ENCODE measurements at regions of chr22 and their contacts with region 1.

Region 1: DNA sequence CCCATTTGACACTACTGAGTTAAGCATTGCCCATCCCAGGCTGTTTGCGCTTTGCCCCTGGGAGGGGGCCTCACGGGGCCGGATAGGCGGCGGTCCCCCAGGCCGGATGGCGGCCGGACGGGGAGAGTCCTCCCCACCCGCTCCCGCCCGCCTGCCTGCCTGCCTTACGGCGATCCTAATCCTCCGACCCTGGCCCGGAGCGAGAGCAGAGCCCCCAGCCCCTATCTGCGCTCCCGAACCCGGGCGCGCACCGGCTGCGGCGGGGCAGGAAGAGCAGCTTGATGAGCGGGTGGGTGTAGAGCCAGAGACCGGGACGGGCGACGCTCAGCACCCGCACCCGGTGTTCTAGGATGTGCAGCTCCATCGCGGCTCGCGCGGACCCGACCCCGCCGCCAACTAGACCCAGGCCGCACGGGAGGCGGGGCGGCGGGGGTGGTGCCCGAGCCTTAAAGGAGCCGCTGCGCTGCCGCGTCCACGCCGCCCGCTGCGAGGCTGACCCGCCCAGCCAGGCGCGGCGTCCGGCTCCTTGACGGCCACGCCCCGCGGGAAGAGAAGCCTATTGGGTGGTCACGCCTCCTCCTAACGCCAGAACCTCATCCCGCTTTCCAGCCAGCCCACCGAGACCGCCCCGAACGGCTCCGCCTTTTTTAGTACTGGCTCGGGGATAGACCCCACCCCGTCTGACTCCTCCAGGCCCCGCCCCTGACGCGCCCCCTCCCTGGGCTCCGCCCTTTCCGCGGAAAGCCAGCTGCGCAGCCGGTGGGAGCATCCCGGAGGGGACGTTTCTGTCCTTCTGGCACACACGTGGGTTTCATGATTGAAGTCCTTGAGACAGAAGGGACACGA is at the start of gene CASTOR1:
- DNase-seq: peak; percentile 90
- ATAC-seq: peak; percentile 85
- H3K4me3 Mint-ChIP-seq: peak within 1 kb of the TSS; percentile 88
- H3K27ac Mint-ChIP-seq: peak within 1 kb of the TSS; percentile 82
- H3K4me1 Mint-ChIP-seq: peaks cover 38% of the 10 kb centered on the region
- H3K27me3 Mint-ChIP-seq: no peaks in the 10 kb centered on the region
- CTCF ChIP-seq: no peak
- total RNA-seq, gene CASTOR1: 2.4 and 3.5 TPM in 2 replicates

Region 2: DNA sequence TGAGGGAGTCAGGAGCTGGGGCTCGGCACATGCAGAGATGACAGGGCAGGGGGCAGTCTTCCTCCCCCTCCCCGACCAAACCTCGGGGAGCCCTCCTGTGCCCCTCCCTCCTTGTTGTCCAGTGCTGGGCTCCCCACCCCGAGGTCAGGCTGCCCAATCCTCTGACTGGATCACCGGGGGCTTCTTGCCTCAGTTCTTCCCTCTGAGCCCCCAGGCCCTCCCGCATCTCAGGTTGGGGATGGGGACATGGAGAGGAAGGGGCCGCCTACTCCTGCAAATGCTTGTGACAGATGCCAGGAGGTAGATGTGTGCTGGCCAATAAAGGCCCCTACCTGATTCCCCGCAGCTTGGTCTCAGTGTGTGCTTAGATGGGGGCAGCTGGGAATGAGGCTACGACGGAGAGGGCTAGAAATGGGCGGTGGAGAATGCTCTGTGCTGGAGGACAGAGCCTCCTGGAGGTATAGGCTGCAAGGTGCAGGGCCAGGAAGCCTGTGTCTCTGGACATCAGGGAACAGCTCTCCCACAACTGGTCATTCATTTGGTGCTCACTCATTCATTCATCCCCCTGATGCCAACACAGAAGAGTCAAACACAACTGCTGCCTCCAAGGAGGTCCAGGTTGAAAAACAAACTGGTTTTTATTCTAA is 1030.0 kb before region 1 on chr22:
- CTCF ChIA-PET with region 1: no interaction called
- POLR2A ChIA-PET with region 1: no interaction called
- intact Hi-C with region 1: no loop called
- DNase-seq: no peak
- ATAC-seq: no peak
- H3K4me3 Mint-ChIP-seq: no peak overlapping the region
- H3K27ac Mint-ChIP-seq: no peak overlapping the region
- H3K4me1 Mint-ChIP-seq: no peaks in the 10 kb centered on the region
- H3K27me3 Mint-ChIP-seq: no peaks in the 10 kb centered on the region
- CTCF ChIP-seq: no peak

Region 3: GRCh38 chr22:30262917-30263741 is 26.2 kb before region 1 on chr22:
- CTCF ChIA-PET with region 1: interaction called, 44 read pairs
- POLR2A ChIA-PET with region 1: interaction called, 7 read pairs
- intact Hi-C with region 1: loop called (anchors 1 kb)
- DNase-seq: peak; percentile 72
- ATAC-seq: peak; percentile 13
- H3K4me3 Mint-ChIP-seq: peak overlapping the region; percentile 59
- H3K27ac Mint-ChIP-seq: peak overlapping the region; percentile 18
- H3K4me1 Mint-ChIP-seq: peaks cover 27% of the 10 kb centered on the region
- H3K27me3 Mint-ChIP-seq: no peaks in the 10 kb centered on the region
- CTCF ChIP-seq: peak; percentile 97

Region 4: GRCh38 chr22:30314915-30315314 is 25.6 kb after region 1 on chr22:
- CTCF ChIA-PET with region 1: interaction called, 23 read pairs
- POLR2A ChIA-PET with region 1: interaction called, 131 read pairs
- intact Hi-C with region 1: loop called (anchors 1 kb)
- DNase-seq: no peak
- ATAC-seq: peak; percentile 50
- H3K4me3 Mint-ChIP-seq: peak overlapping the region; percentile 36
- H3K27ac Mint-ChIP-seq: peak overlapping the region; percentile 79
- H3K4me1 Mint-ChIP-seq: peaks cover 86% of the 10 kb centered on the region
- H3K27me3 Mint-ChIP-seq: no peaks in the 10 kb centered on the region
- CTCF ChIP-seq: no peak

Region 5: DNA sequence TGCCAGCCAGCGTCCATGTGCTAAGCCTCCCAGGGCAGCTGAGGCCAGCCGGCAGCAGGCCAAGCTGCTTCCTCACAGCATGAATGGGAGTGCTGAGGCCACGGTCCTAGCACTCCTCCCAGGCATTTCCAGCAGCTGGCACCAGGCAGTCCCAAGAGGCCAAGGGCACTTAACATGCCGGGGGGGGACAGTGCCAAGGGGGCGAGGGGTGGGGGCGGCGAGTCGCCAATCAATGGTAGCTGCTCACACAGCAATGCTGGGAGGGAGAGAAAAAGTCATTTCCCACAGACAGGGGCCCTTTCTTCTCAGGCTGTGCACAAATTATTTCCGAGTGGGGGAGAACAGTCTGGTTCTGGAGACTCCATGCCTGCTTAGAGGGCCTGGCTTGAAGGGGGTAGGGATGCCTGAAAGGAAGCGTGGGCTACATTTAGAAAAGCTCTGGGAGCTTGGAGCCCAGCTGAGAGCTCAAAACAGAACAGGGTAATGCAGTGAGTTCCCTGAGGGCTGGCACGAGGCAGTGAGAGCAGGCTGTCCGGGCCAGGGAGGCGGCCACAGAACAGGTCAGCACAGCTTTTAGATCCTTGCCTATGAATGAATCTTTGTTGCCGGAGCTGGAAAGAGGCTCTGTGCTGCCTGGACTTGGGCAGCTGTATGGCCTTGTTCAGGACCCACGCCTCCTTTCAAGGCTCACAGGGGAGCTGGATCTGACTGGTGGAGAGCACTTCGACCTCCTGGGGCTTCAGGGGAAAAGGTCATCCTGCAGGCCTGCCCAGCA is 51.7 kb after region 1 on chr22:
- CTCF ChIA-PET with region 1: interaction called, 10 read pairs
- POLR2A ChIA-PET with region 1: interaction called, 3 read pairs
- intact Hi-C with region 1: no loop called
- DNase-seq: no peak
- ATAC-seq: no peak
- H3K4me3 Mint-ChIP-seq: no peak overlapping the region
- H3K27ac Mint-ChIP-seq: no peak overlapping the region
- H3K4me1 Mint-ChIP-seq: no peaks in the 10 kb centered on the region
- H3K27me3 Mint-ChIP-seq: no peaks in the 10 kb centered on the region
- CTCF ChIP-seq: no peak

Region 6: DNA sequence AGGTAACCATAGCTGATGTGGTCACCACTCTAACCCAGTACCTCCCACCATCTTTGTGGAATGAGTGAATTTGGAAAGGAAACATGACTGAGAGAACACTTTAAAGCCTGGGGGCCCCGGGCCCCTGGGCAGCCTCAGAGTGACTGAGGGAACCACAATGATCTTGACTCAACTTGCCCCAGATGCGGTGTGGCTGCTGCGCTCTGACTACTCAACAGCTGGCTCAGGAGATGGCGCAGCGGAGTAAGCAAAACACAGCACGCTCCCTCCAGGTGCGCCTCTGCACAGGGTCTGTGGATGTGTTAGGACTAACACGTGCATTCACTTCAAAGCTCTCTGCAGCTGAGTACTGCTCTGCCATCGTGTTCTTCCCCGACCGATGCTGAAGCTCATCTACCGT is 91.9 kb after region 1 on chr22:
- CTCF ChIA-PET with region 1: interaction called, 275 read pairs
- POLR2A ChIA-PET with region 1: interaction called, 4 read pairs
- intact Hi-C with region 1: no loop called
- DNase-seq: no peak
- ATAC-seq: no peak
- H3K4me3 Mint-ChIP-seq: no peak overlapping the region
- H3K27ac Mint-ChIP-seq: no peak overlapping the region
- H3K4me1 Mint-ChIP-seq: peaks cover 6% of the 10 kb centered on the region
- H3K27me3 Mint-ChIP-seq: no peaks in the 10 kb centered on the region
- CTCF ChIP-seq: no peak

Region 7: GRCh38 chr22:30485362-30485988 is 196.1 kb after region 1 on chr22:
- CTCF ChIA-PET with region 1: interaction called, 15 read pairs
- POLR2A ChIA-PET with region 1: no interaction called
- intact Hi-C with region 1: no loop called
- DNase-seq: peak; percentile 66
- ATAC-seq: peak; percentile 93
- H3K4me3 Mint-ChIP-seq: no peak overlapping the region
- H3K27ac Mint-ChIP-seq: no peak overlapping the region
- H3K4me1 Mint-ChIP-seq: no peaks in the 10 kb centered on the region
- H3K27me3 Mint-ChIP-seq: peaks cover 9% of the 10 kb centered on the region
- CTCF ChIP-seq: peak; percentile 31

Region 8: DNA sequence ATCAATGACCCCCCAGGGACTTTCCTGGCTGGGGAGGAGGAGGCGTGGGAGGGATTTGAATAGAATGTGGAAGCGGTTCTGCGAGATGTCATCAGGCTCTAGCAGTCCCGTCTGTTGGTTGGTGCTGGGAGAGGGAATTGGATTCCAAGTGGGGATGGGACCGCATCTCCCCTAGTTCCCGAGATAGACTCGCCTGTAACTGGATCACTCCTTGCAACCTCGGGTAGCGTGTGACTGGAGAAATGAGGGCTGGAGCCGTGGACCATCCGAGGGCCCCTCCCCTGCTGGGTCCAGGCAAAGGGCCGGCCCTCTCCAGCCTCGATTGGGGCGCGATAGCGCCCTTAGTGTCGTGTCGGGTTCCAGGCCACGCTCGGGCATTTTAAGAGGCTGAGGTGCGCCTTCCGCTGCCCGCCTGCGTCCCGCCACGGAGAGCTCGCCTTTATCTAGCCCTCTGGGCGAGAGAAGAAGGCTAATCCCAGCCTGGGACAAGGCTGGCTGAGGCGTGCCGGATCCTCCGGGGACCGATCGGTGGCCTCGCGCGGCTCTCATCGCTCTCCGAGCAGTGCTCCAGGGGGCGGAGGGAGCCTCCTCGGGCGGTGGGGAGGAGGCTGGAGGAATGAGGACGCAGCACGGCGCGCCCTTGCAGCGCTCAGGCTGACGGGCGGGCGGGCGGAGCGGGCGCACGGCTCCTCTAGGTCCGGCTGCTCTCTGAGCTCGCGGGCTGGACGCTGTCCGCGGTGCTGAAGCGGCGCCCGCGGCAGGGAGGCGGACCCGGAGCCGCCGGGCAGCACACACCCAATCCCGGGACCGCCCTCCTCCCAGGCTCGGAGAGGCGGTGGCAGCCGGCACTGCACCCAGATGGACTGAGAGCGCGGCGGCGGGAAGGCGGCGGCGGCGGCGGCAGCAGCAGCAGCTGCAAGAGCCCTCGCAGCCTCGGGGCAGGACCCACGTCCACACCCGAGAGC is 513.1 kb after region 1 on chr22:
- CTCF ChIA-PET with region 1: no interaction called
- POLR2A ChIA-PET with region 1: no interaction called
- intact Hi-C with region 1: no loop called
- DNase-seq: peak; percentile 32
- ATAC-seq: peak; percentile 74
- H3K4me3 Mint-ChIP-seq: no peak overlapping the region
- H3K27ac Mint-ChIP-seq: no peak overlapping the region
- H3K4me1 Mint-ChIP-seq: no peaks in the 10 kb centered on the region
- H3K27me3 Mint-ChIP-seq: peaks cover 50% of the 10 kb centered on the region
- CTCF ChIP-seq: no peak